Prostate gland (tissue), 2 donors: ENCODE measurements at regions of chr13 and their contacts with region 1.

Region 1: DNA sequence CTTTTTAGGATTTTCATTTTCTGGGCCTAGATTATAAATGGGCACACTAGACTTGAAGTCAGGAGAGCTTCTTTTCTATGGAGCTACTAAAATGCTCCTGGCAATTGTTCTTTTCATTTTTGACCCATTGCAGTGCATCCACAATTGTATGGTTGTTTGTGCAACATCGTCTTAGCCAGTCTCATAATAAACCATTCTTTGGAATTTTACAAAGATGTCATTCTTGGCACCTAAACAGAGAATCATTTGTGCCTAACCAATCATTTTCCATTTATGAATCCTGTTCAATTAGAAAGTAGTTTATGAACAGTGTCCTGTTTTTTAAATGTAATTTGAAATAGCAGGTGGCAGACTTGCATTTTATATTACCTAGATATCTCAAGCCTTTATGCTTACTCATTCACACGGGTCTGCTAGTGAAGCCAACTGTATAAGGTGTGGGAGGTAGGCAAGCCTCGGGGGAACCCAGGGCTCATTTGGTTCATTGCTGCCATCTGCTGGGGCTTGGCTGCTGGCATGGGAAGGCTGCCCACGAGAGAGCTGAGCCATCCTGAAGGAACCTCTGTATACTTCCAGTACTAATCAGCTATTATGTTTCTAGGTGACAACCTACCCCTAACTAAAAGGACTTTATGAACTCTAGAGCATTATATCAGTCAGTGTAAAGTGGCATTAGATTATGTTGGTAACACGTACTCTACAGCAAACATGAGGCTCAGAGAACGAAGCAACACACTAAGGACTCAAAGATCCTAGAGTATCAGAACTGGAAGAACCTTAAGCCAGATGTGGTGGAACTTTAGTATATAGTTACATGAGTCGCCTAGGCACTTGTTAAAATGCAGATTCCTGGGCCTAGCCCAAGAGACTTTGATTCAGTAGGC is 60.0 kb downstream of the TPT1 start:
- DNase-seq: peak; percentile 74
- H3K4me3 ChIP-seq: no peak overlapping the region
- H3K27ac ChIP-seq: no peak overlapping the region
- H3K4me1 ChIP-seq: no peaks in the 10 kb centered on the region
- H3K27me3 ChIP-seq: no peaks in the 10 kb centered on the region
- CTCF ChIP-seq: peak; percentile 28 to 84 (median 76)
- POLR2A ChIP-seq: no peak

Region 2: DNA sequence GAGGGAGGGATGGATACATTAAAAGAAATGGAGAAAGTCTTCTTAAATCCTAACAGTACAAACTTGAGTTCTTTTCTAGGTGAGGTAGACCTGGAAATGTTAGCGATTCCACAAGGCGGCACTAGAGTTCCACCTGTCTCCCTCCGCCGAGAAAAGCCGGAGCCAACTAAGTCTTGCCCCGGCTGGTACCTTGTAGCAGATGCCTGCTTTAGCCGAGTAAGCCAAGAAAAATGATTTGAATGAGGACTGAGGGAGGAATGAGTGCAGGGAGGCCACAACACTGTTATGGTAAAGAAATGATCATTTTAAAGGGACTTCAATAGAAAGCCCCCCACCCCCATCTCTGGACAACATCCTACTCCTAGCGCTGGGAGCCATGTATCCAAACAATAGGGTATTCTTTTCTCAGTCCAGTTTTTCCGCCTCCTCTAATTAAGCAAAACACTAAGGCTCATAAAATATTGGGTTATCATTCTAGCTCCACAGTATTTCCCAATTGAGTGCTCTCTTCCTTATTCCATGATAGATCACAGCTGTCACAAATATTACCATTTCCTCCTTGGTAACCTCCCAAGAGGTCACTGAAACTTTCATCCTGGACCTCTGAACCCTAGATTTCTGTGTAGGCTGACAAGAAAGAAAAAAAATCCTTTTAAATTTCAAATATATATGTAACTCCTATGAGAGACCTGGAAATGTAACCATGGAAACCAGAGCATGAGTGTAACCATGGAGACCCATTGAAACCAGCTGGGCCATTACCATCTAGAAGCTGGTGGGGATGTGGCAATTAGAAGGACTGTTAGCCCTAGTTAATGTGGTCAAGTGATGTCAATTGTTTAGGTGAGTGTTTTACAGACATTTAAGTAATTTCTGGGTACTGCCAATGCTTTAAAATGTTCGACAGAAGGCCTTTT is 233.3 kb before region 1 on chr13:
- intact Hi-C with region 1: loop called (anchors 2 kb)
- DNase-seq: peak; percentile 83
- H3K4me3 ChIP-seq: peak overlapping the region; percentile 19 to 33
- H3K27ac ChIP-seq: no peak overlapping the region
- H3K4me1 ChIP-seq: no peaks in the 10 kb centered on the region
- H3K27me3 ChIP-seq: no peaks in the 10 kb centered on the region
- CTCF ChIP-seq: peak; percentile 64 to 94 (median 88)
- POLR2A ChIP-seq: no peak

Region 3: GRCh38 chr13:45194081-45194939 is 86.7 kb before region 1 on chr13:
- intact Hi-C with region 1: loop called (anchors 5 kb)
- DNase-seq: no peak
- H3K4me3 ChIP-seq: no peak overlapping the region
- H3K27ac ChIP-seq: no peak overlapping the region
- H3K4me1 ChIP-seq: no peaks in the 10 kb centered on the region
- H3K27me3 ChIP-seq: no peaks in the 10 kb centered on the region
- CTCF ChIP-seq: no peak
- POLR2A ChIP-seq: no peak

Region 4: DNA sequence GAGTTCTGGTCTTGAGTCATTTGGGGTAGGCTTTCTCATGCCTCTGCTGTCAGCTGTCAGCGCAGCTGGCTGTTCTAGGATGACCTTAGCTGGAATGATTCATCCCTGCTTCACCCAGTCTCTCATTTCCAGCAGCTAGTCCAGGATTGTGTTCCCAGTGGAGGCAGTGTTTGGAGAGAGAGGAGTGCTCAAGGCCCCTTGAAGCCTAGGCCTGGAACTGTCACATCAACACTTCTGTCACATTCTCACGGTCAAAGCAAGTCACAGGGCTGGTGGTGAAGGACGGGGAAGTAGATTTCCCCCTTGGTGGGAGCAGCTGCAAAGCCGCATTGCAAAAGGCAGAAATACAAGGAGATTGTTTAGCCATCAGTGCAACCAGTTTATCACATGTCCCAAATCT is 44.8 kb after region 1 on chr13:
- intact Hi-C with region 1: no loop called
- DNase-seq: no peak
- H3K4me3 ChIP-seq: no peak overlapping the region
- H3K27ac ChIP-seq: no peak overlapping the region
- H3K4me1 ChIP-seq: no peaks in the 10 kb centered on the region
- H3K27me3 ChIP-seq: no peaks in the 10 kb centered on the region
- CTCF ChIP-seq: no peak
- POLR2A ChIP-seq: no peak

Region 5: GRCh38 chr13:45446181-45446580 is 165.2 kb after region 1 on chr13:
- intact Hi-C with region 1: no loop called
- DNase-seq: no peak
- H3K4me3 ChIP-seq: no peak overlapping the region
- H3K27ac ChIP-seq: no peak overlapping the region
- H3K4me1 ChIP-seq: no peaks in the 10 kb centered on the region
- H3K27me3 ChIP-seq: no peaks in the 10 kb centered on the region
- CTCF ChIP-seq: no peak
- POLR2A ChIP-seq: no peak